ENCODE measurements at regions of chr2 and their contacts with region 1.

Region 1: GRCh38 chr2:135876066-135876711 is at the start of gene MCM6:
- DNase-seq: peak; percentile 96 to 98 (median 97)
- H3K4me3 ChIP-seq: peak within 1 kb of the TSS; percentile 89
- H3K27ac ChIP-seq: peak within 1 kb of the TSS; percentile 82 to 85
- H3K4me1 ChIP-seq: peaks cover 7% of the 10 kb centered on the region
- H3K27me3 ChIP-seq: no peaks in the 10 kb centered on the region
- CTCF ChIP-seq: peak in 2 of 3 donors; percentile 12 to 23
- EP300 ChIP-seq: no peak
- POLR2A ChIP-seq: no peak
- total RNA-seq, gene MCM6: 7.2 to 20.1 (median 15.4) TPM

Region 2: DNA sequence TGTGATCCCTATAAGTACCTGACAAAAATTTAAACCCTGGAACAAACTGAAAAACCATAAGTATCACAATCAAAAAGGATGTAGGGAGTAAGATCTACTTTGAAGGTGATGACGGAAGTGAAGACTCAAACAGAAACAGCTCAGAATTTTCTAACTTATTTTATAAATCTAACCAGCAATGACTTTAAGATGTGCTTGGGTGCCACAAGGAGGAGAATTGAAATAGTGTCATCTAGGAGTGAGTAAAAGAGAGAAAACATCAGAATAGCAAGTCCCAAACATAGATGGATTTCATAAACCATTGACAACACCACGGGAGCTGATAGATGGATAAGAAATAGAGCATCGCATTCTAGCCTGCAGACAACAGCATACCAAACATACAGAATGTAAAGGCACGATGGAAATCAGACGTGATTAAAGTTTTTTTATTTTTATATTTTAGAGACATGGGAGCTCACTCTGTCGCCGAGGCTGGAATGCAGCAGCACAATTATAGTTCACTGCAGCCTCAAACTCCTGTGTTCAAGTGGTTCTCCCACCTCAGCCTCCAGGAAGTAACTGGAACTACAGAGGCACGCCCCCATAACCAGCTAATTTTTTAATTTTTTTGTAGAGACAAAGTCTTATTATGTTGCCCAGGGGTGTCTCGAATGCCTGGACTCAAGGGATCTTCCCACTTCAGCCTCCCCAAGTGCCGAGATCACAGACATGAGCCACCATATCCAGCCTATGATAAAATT is 865.8 kb before region 1 on chr2:
- intact Hi-C with region 1: loop called in 1 of 4 experiments (anchors 10 kb)
- DNase-seq: no peak
- H3K4me3 ChIP-seq: no peak overlapping the region
- H3K27ac ChIP-seq: no peak overlapping the region
- H3K4me1 ChIP-seq: no peaks in the 10 kb centered on the region
- H3K27me3 ChIP-seq: no peaks in the 10 kb centered on the region
- CTCF ChIP-seq: no peak
- EP300 ChIP-seq: no peak
- POLR2A ChIP-seq: no peak

Region 3: DNA sequence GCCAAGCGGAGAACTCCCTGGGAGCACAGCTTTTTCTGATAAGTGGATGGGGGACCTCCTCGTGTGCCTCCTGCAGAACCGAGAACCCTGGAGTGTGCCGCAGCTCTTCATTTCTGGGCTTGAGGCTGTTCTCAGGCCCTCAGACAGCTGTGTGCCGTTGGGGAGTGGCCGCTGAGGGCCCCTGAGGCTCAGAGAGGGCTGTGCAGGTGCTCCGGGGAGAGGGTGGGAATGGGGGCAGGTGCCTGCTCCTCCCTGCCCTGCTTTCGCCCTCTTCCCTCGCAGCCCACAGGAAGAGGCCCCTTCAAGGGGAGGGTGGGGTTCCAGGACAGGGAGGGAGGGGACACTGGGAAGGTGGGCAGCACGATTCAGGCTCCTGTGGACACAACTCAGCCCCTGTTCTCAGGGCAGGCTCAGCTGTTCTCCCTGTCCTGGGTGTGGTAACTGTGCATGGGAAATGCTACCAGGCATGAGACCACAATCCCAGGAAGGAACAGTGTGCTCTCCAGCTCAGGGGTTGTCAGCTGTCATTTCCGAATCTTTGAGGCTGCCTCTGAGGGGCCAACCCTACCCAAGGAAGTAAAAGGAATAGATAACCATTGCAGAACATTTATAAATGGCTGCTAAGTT is 50.5 kb before region 1 on chr2:
- intact Hi-C with region 1: no loop called
- DNase-seq: no peak
- H3K4me3 ChIP-seq: no peak overlapping the region
- H3K27ac ChIP-seq: no peak overlapping the region
- H3K4me1 ChIP-seq: no peaks in the 10 kb centered on the region
- H3K27me3 ChIP-seq: no peaks in the 10 kb centered on the region
- CTCF ChIP-seq: no peak
- EP300 ChIP-seq: no peak
- POLR2A ChIP-seq: no peak